Sigmoid colon (tissue), 7 donors: ENCODE measurements at regions of chrX and their contacts with region 1.

Region 1: DNA sequence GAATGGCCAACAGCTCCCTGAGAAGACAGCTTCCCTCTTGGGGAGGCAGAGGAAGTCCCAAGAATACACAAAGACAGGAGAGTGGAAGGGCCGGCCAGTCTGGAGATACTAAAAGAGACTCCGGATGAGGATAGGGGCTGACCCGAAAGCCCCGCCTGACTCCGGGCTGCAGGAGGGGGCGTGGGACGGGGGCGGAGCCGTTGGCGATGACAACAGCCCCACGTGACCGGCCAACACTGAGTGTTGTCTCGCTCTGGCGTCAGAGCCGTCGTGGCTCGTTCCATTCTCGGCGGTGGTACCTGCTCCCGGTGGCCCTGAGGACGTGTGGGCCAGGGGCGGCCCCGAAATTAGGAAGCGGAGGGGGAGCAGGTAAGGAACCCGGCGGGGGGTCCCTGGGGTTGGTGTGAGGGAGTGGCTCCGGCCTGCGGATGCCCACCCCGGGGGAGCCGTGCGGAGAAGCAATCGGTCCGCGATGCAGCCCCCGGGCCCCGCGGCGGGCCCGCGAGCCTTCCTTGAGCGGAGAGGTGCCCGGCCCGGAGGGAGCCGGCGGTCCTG is at the start of gene BEX4:
- DNase-seq: peak; percentile 95
- H3K4me3 ChIP-seq: peak within 1 kb of the TSS; percentile 81 to 85 (median 82)
- H3K27ac ChIP-seq: peak within 1 kb of the TSS; percentile 90 to 96 (median 92)
- H3K4me1 ChIP-seq: no peaks in the 10 kb centered on the region
- H3K27me3 ChIP-seq: no peaks in the 10 kb centered on the region
- CTCF ChIP-seq: no peak
- EP300 ChIP-seq: no peak
- POLR2A ChIP-seq: peak; percentile 77 to 89
- total RNA-seq, gene BEX4: 45.5 to 86.6 (median 56.9) TPM

Region 2: DNA sequence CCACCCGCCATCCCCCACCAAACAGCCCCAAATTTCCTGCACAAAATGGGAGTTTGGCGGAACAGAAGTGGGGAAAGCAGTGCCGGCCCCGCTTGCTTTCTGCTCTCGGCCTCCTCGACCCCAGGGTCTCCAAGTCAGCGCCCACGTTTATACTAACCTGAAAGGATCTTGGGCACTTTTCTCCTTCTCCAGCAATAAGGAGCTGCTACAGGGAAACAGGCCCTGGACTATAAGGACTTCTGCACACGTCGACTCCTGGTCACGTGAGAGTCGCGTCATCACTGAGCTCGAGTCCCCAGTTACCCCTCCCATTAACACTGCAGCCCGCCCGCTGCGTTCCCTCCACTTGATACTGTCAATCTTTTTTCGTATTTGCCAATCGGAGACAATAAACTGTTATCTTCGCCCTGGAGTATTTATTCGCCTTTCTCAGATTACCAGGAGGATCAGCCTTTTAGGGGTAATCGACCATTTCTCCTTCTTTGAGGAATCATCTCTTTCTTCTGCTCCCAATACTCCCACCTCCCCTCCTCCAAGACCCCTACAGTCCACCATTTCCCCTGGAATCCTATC is 40.1 kb after region 1 on chrX and contains the start of gene TCEAL8:
- intact Hi-C with region 1: loop called (anchors 2 kb)
- DNase-seq: peak; percentile 93
- H3K4me3 ChIP-seq: peak within 1 kb of the TSS; percentile 45 to 66 (median 59)
- H3K27ac ChIP-seq: peak within 1 kb of the TSS; percentile 79 to 89 (median 86)
- H3K4me1 ChIP-seq: no peaks in the 10 kb centered on the region
- H3K27me3 ChIP-seq: no peaks in the 10 kb centered on the region
- CTCF ChIP-seq: no peak
- EP300 ChIP-seq: no peak
- POLR2A ChIP-seq: peak; percentile 70 to 71
- total RNA-seq, gene TCEAL8: 69.1 to 94.1 (median 85.8) TPM

Region 3: DNA sequence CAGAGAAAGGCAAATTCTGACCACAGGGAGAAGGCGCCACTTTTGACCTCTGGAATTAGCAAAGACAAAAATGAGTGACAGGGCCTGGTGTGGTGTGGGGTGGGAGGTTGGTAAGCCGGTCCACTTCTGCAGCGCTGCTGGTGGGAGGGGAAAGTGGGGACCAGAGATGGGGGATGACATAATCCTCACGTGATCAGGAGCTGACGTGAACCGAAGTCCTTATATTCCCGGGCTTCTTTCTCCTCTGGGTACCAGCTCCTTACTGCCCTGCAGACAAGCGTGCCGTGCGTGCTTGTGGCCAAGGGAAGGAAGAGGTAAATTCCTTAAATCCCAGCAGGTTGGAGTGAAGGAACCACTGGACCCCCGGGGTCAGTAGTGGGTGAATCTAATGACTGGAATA is 115.0 kb after region 1 on chrX and contains the start of gene TCEAL7:
- intact Hi-C with region 1: loop called (anchors 10 kb)
- DNase-seq: peak; percentile 79
- H3K4me3 ChIP-seq: peak within 1 kb of the TSS; percentile 23 to 47 (median 44)
- H3K27ac ChIP-seq: peak within 1 kb of the TSS; percentile 12 to 63 (median 56)
- H3K4me1 ChIP-seq: peaks cover 0 to 5% (median 0%) of the 10 kb centered on the region in 4 donors
- H3K27me3 ChIP-seq: peaks cover 0 to 2% (median 0%) of the 10 kb centered on the region in 3 donors
- CTCF ChIP-seq: no peak
- EP300 ChIP-seq: no peak
- POLR2A ChIP-seq: peak in 1 of 2 donors; percentile 25
- total RNA-seq, gene TCEAL7: 19.7 to 35.2 (median 32.4) TPM

Region 4: DNA sequence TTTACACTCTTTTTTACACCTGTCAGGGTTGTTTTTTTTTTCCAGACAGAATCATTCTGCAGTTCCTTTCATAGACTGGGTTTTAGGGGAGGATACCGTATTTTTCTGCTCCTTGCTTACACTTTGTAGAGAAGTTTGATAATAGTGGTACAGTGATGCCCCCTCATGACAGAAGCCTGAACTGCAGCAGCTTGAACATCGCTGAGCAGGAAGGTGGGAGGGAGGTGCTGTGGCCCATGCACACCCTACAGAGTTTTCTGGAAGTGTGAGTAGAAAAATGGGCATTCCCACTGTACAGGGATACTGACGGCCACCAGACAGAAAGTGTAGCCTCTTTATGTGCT is 249.8 kb after region 1 on chrX:
- intact Hi-C with region 1: loop called (anchors 2 kb)
- DNase-seq: peak; percentile 76
- H3K4me3 ChIP-seq: peak overlapping the region in 3 of 4 donors; percentile 27 to 38 (median 31)
- H3K27ac ChIP-seq: no peak overlapping the region
- H3K4me1 ChIP-seq: no peaks in the 10 kb centered on the region
- H3K27me3 ChIP-seq: no peaks in the 10 kb centered on the region
- CTCF ChIP-seq: peak; percentile 45 to 68 (median 54)
- EP300 ChIP-seq: no peak
- POLR2A ChIP-seq: no peak

Region 5: GRCh38 chrX:103629318-103630170 is 414.6 kb after region 1 on chrX:
- intact Hi-C with region 1: loop called (anchors 10 kb)
- DNase-seq: peak; percentile 83
- H3K4me3 ChIP-seq: peak overlapping the region; percentile 46 to 65 (median 60)
- H3K27ac ChIP-seq: peak overlapping the region; percentile 89 to 95 (median 92)
- H3K4me1 ChIP-seq: peaks cover 0 to 17% (median 3%) of the 10 kb centered on the region in 4 donors
- H3K27me3 ChIP-seq: no peaks in the 10 kb centered on the region
- CTCF ChIP-seq: peak in 2 of 4 experiments; percentile 15 to 30
- EP300 ChIP-seq: no peak
- POLR2A ChIP-seq: peak; percentile 15 to 21